Activated CD8-positive, alpha-beta memory T cell treated with anti-CD3 and anti-CD28 coated beads, Interleukin-2, amount 10 ng/mL, durations not matched to agents 7 days and 5 days (primary cell): ENCODE measurements at regions of chr7 and their contacts with region 1.

Region 1: GRCh38 chr7:43582503-43583423 is at the start of gene STK17A:
- DNase-seq: peak; percentile 95
- ATAC-seq: peak; percentile 82
- H3K4me3 Mint-ChIP-seq: peak within 1 kb of the TSS; percentile 98
- H3K27ac Mint-ChIP-seq: peak within 1 kb of the TSS; percentile 97
- H3K4me1 Mint-ChIP-seq: peaks cover 23% of the 10 kb centered on the region
- H3K27me3 Mint-ChIP-seq: peaks cover 18% of the 10 kb centered on the region
- total RNA-seq, gene STK17A: 84.9 to 86.1 TPM

Region 2: DNA sequence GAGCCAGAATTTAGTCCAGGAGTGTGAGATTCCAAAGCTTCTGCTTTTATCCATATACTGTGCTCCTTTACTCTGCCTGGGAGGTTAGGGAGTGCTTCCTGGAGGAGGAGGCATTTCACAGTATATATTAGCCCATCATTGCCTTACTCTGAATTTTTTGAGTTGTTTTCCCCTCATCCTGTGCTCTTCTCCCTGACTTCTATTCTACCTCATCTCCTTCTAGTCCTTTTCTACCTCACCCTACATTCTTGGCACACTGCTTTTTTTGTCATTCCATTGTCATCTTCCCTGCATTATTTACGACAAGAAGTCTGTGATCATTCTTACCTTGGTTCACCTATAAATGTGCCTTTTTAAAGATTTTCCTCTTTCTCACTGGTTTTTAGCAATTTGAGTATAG is 21.5 kb after region 1 on chr7:
- CTCF ChIA-PET with region 1: interaction called, 15 read pairs
- DNase-seq: no peak
- ATAC-seq: no peak
- H3K4me3 Mint-ChIP-seq: no peak overlapping the region
- H3K27ac Mint-ChIP-seq: no peak overlapping the region
- H3K4me1 Mint-ChIP-seq: peaks cover 52% of the 10 kb centered on the region
- H3K27me3 Mint-ChIP-seq: no peaks in the 10 kb centered on the region

Region 3: GRCh38 chr7:43639858-43640491 is 57.2 kb after region 1 on chr7:
- CTCF ChIA-PET with region 1: interaction called, 90 read pairs
- DNase-seq: no peak
- ATAC-seq: no peak
- H3K4me3 Mint-ChIP-seq: no peak overlapping the region
- H3K27ac Mint-ChIP-seq: peak overlapping the region; percentile 64
- H3K4me1 Mint-ChIP-seq: peaks cover 75% of the 10 kb centered on the region
- H3K27me3 Mint-ChIP-seq: no peaks in the 10 kb centered on the region

Region 4: GRCh38 chr7:43679210-43680068 is 96.7 kb after region 1 on chr7:
- CTCF ChIA-PET with region 1: interaction called, 13 read pairs
- DNase-seq: no peak
- ATAC-seq: peak; percentile 45
- H3K4me3 Mint-ChIP-seq: no peak overlapping the region
- H3K27ac Mint-ChIP-seq: peak overlapping the region; percentile 29
- H3K4me1 Mint-ChIP-seq: peaks cover 37% of the 10 kb centered on the region
- H3K27me3 Mint-ChIP-seq: no peaks in the 10 kb centered on the region

Region 5: DNA sequence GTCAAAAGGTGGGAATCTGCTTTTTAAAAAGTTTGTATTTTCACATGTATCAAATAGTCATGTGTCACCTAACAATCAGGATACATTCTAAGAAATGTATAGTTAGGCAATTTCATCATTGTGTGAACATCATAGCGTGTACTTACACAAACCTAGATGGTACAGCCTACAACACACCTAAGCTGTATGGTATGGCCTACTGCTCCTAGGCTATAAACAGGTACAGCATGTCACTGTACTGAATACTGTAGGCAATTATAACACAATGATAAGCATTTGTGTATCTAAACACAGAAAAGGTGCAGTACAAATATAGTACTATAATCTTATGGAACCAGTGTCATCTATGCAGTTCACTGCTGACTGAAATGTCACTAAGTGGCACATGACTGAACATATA is 128.7 kb after region 1 on chr7:
- CTCF ChIA-PET with region 1: interaction called, 38 read pairs
- DNase-seq: no peak
- ATAC-seq: no peak
- H3K4me3 Mint-ChIP-seq: no peak overlapping the region
- H3K27ac Mint-ChIP-seq: no peak overlapping the region
- H3K4me1 Mint-ChIP-seq: peaks cover 2% of the 10 kb centered on the region
- H3K27me3 Mint-ChIP-seq: no peaks in the 10 kb centered on the region

Region 6: GRCh38 chr7:43834463-43835251 is 251.9 kb after region 1 on chr7:
- CTCF ChIA-PET with region 1: interaction called, 140 read pairs
- DNase-seq: peak; percentile 62
- ATAC-seq: peak; percentile 76
- H3K4me3 Mint-ChIP-seq: peak overlapping the region; percentile 78
- H3K27ac Mint-ChIP-seq: peak overlapping the region; percentile 95
- H3K4me1 Mint-ChIP-seq: peaks cover 28% of the 10 kb centered on the region
- H3K27me3 Mint-ChIP-seq: peaks cover 13% of the 10 kb centered on the region